ENCODE measurements at regions of chr3 and their contacts with region 1.

Region 1: GRCh38 chr3:148778926-148779325 is 48.7 kb upstream of the CPB1 start:
- DNase-seq: no peak
- H3K4me3 ChIP-seq: no peak overlapping the region
- H3K4me3 Mint-ChIP-seq: no peak overlapping the region
- H3K27ac ChIP-seq: no peak overlapping the region
- H3K27ac Mint-ChIP-seq: no peak overlapping the region
- H3K4me1 ChIP-seq: no peaks in the 10 kb centered on the region
- H3K4me1 Mint-ChIP-seq: no peaks in the 10 kb centered on the region
- H3K27me3 ChIP-seq: no peaks in the 10 kb centered on the region
- H3K27me3 Mint-ChIP-seq: no peaks in the 10 kb centered on the region

Region 2: DNA sequence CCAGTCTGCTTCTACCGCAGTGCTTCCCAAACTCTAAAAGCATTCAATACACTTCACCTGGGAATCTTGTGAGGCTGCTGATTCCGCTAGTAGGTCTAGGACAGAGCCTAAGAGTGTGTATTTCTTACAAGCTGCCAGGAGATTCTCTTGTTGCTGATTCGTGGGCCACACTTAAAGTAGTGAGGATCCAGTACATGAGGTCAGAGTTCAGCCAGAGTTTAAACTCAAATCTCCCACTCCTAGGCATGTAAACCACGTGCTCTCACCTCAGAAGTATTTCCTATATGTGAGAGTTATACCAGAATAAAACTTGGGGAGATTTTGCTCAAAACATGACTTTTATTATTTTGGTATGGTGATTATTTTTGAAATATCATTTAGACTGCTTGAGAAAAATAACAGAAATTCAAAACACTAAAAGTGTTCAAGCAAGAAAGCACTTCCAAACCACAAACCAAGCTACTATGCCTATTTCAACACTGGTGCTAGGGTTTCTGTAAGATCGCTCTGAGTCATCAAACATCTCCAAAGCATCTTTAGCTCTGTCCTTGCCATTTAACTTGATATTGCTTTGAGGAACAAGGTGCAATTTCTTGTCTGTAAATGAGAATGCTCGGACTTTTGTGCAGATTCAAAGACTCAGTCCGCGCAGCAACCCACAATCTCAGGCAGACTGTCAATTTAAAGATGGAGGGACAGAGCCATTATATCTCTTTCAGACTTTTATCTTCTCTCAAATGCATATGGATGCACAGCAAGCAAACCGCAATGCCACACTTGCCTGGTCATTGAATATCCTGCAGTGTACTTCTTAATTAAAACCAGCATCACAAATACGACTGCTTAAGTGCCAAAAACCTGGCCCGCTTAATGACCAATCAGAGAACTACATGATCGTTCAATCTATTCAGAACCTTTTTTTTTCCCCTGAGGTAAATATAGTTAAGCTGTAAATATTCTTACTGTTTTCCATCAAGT is 21.4 kb before region 1 on chr3:
- CTCF ChIA-PET with region 1: no interaction called
- POLR2A ChIA-PET with region 1: no interaction called
- intact Hi-C with region 1: loop called (anchors 1 kb)
- DNase-seq: no peak
- H3K4me3 ChIP-seq: no peak overlapping the region
- H3K4me3 Mint-ChIP-seq: no peak overlapping the region
- H3K27ac ChIP-seq: no peak overlapping the region
- H3K27ac Mint-ChIP-seq: no peak overlapping the region
- H3K4me1 ChIP-seq: no peaks in the 10 kb centered on the region
- H3K4me1 Mint-ChIP-seq: no peaks in the 10 kb centered on the region
- H3K27me3 ChIP-seq: no peaks in the 10 kb centered on the region
- H3K27me3 Mint-ChIP-seq: no peaks in the 10 kb centered on the region

Region 3: DNA sequence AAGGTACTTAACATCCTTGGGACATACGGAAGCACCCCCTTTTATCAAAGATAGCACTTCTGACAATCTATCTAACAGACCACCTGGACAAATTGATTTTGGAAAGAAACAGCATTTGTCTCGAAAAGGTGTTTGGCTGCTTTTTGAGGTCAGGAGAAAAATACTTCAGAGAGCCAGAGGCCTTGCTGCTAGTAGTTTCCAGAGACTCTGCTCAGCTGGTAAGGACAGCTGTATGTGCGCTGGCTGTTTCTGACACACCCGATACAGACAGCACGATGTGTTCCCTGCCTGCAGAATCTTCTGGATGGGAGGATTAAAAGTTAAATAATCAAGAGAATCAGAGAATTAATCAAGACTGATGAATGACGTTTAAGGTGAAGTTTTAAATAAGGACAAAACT is 196.8 kb after region 1 on chr3:
- CTCF ChIA-PET with region 1: no interaction called
- POLR2A ChIA-PET with region 1: no interaction called
- intact Hi-C with region 1: no loop called
- DNase-seq: no peak
- H3K4me3 ChIP-seq: no peak overlapping the region
- H3K4me3 Mint-ChIP-seq: no peak overlapping the region
- H3K27ac ChIP-seq: no peak overlapping the region
- H3K27ac Mint-ChIP-seq: no peak overlapping the region
- H3K4me1 ChIP-seq: no peaks in the 10 kb centered on the region
- H3K4me1 Mint-ChIP-seq: peaks cover 2 to 4% (median 3%) of the 10 kb centered on the region in 4 donors
- H3K27me3 ChIP-seq: no peaks in the 10 kb centered on the region
- H3K27me3 Mint-ChIP-seq: peaks cover 0 to 2% of the 10 kb centered on the region in 2 donors